ENCODE measurements at regions of chr5 and their contacts with region 1.

Region 1: DNA sequence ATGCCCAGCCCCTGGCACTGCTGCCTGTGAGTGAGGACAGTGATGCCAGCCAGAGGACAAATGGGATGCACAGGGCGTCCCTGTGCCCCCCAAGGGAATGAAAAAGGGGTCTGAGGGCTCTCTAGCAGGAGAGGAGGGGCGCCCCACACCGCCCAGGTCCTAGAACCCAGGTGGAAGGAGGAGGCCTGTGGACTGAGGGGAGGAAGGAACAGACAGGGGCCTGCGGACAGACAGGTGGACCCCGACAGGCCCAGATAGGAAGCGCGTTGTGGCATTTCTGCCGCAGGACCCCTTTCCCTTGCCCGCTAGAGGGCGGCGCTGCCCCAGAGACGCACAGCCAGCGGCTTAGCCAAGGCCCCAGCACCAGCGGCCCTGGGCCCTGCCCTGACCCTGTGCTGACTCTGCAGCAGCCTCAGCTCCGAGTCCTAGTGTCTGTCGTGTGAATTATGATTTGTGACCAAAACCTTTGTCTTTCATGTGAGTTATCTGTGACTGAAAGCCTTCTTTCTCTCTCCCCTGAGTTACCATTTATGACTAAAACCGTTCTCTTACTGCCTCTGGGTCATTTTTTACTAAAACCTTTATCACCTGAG is 30.7 kb downstream of the TRIP13 start:
- DNase-seq: peak; percentile 11
- H3K4me3 ChIP-seq: no peak overlapping the region
- H3K27ac ChIP-seq: no peak overlapping the region
- H3K27me3 ChIP-seq: peaks cover 13% of the 10 kb centered on the region
- CTCF ChIP-seq: peak; percentile 96

Region 2: DNA sequence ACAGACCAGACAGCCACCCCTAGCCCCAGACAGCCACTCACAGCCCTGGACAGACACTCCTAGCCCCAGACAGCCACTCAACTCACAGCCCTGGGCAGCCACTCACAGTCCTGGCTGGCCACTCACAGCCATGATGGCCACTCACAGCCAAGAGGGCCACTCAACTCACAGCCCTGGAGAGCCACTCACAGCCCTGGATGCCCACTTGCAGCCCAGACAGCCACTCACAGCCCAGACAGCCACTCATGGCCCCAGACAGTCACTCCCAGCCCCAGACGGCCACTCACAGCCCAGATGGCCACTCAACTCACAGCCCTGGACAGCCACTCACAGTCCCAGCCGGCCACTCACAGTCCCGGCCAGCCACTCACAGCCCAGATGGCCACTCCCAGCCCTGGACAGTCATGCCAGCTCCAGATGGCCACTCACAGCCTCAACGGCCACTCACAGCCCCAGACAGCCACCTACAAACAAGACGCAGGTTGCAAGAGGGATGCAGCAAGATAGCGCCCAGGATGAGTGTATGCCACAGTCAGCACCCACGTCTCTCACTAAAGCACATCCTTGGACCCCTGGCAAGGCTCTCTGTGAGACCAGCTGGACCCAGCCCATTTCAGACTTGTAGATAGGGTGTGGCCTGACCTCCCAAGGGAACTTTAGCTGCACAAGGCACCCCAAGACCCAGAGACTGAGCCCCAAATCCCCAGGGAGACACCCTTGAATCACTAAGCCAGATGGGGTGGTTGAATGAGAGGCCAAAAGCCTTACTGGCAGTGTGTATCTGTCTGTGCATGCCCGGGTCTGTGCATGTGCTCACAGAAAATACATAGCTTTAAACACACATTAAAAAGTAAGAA is 161.3 kb before region 1 on chr5:
- CTCF ChIA-PET with region 1: no interaction called
- POLR2A ChIA-PET with region 1: no interaction called
- DNase-seq: no peak
- H3K4me3 ChIP-seq: no peak overlapping the region
- H3K27ac ChIP-seq: no peak overlapping the region
- H3K27me3 ChIP-seq: peaks cover 9% of the 10 kb centered on the region
- CTCF ChIP-seq: no peak

Region 3: DNA sequence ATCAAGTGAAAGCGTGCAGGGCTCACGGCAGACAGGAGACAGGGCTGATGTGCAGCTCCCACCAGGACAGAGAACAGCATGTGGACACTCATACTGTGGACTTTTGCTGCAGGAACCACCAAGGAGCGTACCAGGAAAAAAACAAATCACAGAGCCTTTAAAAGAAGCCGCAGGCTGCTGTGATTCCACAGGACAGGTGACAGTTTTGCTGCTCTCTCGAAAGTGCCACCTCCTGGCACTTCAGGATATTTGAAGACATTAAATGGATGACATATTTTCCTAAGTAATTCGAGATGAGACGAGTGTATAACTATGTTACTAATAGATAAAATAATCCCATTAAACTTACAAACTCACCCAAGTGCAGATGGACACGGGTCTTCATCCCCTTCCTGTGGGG is 101.9 kb before region 1 on chr5:
- CTCF ChIA-PET with region 1: no interaction called
- POLR2A ChIA-PET with region 1: no interaction called
- DNase-seq: no peak
- H3K4me3 ChIP-seq: no peak overlapping the region
- H3K27ac ChIP-seq: no peak overlapping the region
- H3K27me3 ChIP-seq: peaks cover 5% of the 10 kb centered on the region
- CTCF ChIP-seq: no peak

Region 4: GRCh38 chr5:1140171-1140817 is 216.9 kb after region 1 on chr5:
- CTCF ChIA-PET with region 1: interaction called, 20 read pairs
- POLR2A ChIA-PET with region 1: no interaction called
- DNase-seq: no peak
- H3K4me3 ChIP-seq: no peak overlapping the region
- H3K27ac ChIP-seq: no peak overlapping the region
- H3K27me3 ChIP-seq: peaks cover 3% of the 10 kb centered on the region
- CTCF ChIP-seq: peak; percentile 54

Region 5: DNA sequence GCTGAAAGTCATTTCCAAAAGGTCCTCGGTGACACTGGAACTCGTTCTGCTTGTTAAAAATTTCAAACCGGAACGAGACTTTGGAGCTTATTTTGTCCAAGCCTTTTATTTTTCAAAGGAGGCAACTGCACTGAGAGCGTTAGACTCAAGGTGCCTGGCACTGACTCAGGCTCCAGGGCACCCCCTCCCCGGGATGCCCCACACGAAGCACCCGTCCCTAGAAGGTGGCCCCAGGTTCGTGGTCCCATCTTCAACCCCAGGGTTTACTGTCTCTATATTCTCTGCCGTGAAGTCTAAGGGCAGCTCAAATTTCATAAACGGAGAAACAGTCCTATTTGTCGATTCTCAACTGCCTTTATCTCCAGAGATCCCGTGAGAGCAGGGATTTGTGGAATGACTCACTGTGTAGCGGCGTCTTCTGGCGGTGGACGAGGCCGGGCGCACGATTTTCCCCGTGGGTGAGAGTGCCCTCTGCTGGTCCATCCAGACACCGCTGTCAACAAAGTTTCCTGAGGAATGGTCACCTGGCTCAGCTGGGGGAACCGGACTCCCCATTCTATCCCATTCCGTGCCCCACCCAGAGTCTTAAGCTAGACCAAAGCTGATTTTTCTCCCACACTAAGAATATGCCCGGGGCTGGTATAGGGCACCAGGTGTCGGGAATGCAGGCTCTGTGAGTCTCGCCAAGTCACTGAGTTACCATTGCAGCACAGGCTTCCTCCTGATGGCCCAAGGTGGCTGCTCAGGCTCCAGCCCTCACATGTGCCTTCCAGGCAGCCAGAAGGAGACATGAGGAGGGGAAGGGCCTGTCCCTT is 251.0 kb after region 1 on chr5:
- CTCF ChIA-PET with region 1: interaction called, 28 read pairs
- POLR2A ChIA-PET with region 1: no interaction called
- DNase-seq: no peak
- H3K4me3 ChIP-seq: no peak overlapping the region
- H3K27ac ChIP-seq: no peak overlapping the region
- H3K27me3 ChIP-seq: no peaks in the 10 kb centered on the region
- CTCF ChIP-seq: peak; percentile 49

Region 6: DNA sequence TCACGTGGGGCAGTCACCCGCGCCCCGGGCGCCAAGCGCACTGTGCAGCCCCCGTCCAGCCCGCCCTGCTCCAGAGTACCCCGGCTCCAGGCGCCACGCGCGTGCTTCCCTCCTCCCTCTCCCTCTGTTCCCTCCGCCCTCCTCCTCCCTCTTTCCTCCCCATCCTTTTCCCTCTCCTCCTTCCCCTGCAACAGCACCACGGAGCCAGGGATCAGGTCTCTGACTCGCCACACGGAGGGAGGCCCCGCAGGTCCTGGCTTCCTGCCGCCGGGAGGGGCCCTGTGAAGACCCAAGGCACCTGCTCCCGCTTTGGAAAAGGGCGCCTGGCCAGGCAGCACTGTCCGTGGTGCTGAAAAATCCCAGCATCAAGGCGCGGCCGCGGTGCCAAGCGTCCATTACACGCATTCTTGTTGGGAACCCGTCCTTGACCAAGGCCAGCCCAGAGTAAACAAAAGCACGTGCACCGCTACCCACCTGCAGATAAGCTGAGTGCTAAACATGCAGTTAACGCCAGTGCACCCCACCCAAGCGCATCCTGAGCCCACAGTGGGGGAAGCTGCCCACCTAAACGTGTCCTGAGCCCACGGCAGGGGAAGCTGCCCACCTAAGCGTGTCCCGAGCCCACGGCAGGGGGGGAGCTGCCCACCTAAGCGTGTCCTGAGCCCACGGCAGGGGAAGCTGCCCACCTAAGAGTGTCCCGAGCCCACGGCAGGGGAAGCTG is 323.5 kb after region 1 on chr5:
- CTCF ChIA-PET with region 1: no interaction called
- POLR2A ChIA-PET with region 1: no interaction called
- DNase-seq: no peak
- H3K4me3 ChIP-seq: no peak overlapping the region
- H3K27ac ChIP-seq: no peak overlapping the region
- H3K27me3 ChIP-seq: no peaks in the 10 kb centered on the region
- CTCF ChIP-seq: no peak

Measured in AG04450 (cell line).